ENCODE measurements at regions of chr1 and their contacts with region 1.

Region 1: DNA sequence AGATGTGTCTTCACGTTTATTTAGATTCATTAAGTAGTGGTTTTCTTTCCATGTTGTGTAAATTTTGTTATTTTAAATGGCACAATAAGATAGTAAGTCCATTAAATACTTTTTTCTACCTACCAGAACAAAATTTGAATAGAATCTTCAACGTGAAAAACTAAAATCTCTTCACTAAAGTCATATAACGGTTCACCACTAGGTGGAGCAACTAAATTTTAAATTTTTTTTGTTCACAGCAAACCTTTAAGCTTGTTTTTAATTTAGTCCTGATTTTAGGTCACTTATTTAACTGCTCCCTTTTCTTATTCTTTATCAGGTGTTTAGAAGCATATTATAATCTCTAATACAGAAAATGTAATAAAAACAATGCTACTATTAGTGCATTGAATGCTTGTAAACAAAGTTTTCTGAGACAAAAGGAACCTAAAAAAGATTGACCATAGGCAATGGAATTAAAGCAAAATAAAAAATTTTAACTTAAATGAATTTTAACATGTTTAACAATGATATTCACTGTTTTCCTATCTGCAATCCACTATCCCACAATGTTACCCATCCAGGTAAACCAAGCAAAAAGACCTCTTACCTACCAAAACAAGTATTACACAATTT is 28.3 kb upstream of the PKN2 start:
- DNase-seq: no peak
- ATAC-seq: no peak

Region 2: DNA sequence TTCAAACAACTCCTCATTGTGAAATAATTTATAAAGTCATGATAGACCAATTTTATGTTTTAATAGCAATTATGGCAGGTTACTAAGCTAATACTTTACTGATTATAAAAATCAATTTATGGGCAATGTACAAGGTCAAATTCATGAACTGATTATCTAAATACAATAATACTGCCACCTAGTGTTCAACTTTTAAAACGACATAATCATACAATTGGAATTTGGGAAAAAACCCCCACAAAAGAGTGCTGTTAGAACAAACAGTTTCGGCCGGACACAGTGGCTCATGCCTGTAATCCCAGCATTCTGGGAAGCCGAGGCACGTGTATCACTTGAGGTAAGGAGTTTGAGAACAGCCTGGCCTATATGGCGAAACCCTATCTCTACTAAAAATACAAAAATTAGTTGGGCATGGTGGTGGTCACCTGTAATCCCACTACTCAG is 221.6 kb after region 1 on chr1:
- intact Hi-C with region 1: loop called (anchors 5 kb)
- DNase-seq: no peak
- ATAC-seq: peak; percentile 55

Measured in Right ventricle myocardium superior (tissue), 1 donor.